ENCODE measurements at regions of chr1 and their contacts with region 1.

Region 1: GRCh38 chr1:171781176-171781875 is at the start of gene METTL13:
- DNase-seq: peak; percentile 95
- H3K4me3 ChIP-seq: peak within 1 kb of the TSS; percentile 84 to 92 (median 85)
- H3K27ac ChIP-seq: peak within 1 kb of the TSS; percentile 86 to 95 (median 90)
- H3K4me1 ChIP-seq: peaks cover 14 to 50% (median 18%) of the 10 kb centered on the region in 3 donors
- H3K27me3 ChIP-seq: no peaks in the 10 kb centered on the region
- CTCF ChIP-seq: peak in 1 of 6 experiments; percentile 15
- POLR2A ChIP-seq: peak in 3 of 4 donors; percentile 83 to 94 (median 93)
- total RNA-seq, gene METTL13: 14.0 to 20.8 (median 18.3) TPM

Region 2: DNA sequence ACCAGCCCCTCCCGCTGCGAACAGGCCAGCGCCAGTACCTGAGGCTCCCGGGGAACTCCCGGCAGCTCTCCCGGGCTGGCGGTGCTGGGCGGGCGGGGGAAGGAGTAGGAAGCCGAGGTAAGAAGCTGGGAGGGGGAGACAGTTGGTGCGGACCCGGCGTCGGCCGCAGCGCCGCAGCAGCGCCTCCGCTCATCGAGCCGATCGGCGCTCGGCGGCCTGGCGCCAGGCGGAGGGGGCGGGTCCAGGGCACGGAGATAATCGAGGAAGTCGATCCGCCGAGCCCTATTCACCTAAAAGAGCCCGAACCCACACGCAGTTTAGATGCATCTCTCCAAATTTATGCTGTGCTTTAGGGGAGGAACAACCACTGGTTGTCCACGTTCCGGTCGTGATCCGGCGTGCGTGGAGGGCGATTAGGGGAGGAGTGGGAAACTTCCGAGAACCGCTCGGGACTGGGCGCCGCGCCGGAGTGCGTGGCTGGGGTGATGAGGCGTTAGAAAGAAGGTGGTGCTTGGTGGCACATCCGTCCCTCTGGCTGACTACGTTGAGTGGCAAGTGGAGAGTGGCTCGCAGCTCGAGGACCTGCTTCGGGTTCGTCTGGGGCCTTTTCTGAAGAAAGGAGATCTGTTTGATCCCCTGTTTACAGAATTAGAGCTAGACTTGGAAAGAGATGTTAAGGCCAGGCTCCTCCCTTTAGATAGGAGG is 39.3 kb before region 1 on chr1 and contains the start of gene VAMP4:
- intact Hi-C with region 1: loop called (anchors 5 kb)
- DNase-seq: peak; percentile 72
- H3K4me3 ChIP-seq: peak within 1 kb of the TSS; percentile 82 to 99 (median 86)
- H3K27ac ChIP-seq: peak within 1 kb of the TSS; percentile 92 to 99 (median 98)
- H3K4me1 ChIP-seq: peaks cover 15 to 40% (median 27%) of the 10 kb centered on the region in 3 donors
- H3K27me3 ChIP-seq: no peaks in the 10 kb centered on the region
- CTCF ChIP-seq: peak in 1 of 6 experiments; percentile 7
- POLR2A ChIP-seq: peak in 3 of 4 donors; percentile 74 to 93 (median 82)
- total RNA-seq, gene VAMP4: 3.5 to 11.4 (median 6.3) TPM